OCI-LY7 (cell line): ENCODE measurements at regions of chr4 and their contacts with region 1.

Region 1: DNA sequence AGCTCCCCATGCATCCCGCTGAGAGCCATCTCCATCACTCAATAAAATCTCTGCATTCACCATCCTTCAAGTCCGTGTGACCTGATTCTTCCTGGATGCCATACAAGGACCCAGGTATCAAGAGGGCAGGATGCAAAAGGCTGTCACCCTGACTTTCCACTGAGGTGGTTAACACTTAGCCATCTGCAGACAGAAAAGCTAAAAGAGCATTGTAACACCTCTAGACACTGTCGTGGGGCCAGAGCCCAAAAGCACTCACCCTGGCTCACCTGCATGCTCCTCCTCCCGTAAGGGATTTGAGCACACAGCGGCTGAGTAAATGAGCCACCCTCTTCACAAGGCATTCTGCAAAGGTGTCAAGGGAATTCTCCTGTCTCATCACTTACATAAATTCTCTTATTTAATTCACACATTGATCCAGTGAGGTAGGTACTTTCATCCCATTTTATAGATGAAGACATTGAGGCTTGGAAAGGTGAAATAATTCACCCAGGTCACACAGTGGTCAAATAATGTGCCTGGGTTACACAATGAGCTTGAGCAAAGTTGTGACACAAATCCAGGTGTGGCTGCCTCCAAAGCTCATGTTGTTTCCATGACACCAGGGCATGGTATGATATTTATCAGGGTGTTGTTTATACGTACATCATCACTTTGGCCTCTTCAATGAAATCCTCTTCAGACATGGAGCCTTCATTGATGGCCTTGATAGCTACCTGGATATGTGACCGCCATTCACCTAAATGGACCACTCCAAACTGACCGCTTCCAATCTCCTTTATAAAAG is 48.0 kb downstream of the TXK start:
- DNase-seq: no peak
- H3K4me3 ChIP-seq: no peak overlapping the region
- H3K27ac ChIP-seq: no peak overlapping the region
- H3K4me1 ChIP-seq: no peaks in the 10 kb centered on the region
- CTCF ChIP-seq: no peak

Region 2: GRCh38 chr4:47836641-47837093 is 249.3 kb before region 1 on chr4:
- CTCF ChIA-PET with region 1: no interaction called
- POLR2A ChIA-PET with region 1: no interaction called
- intact Hi-C with region 1: loop called (anchors 5 kb)
- DNase-seq: peak; percentile 73
- H3K4me3 ChIP-seq: peak overlapping the region; percentile 68
- H3K27ac ChIP-seq: no peak overlapping the region
- H3K4me1 ChIP-seq: peaks cover 9% of the 10 kb centered on the region
- CTCF ChIP-seq: peak; percentile 76

Region 3: DNA sequence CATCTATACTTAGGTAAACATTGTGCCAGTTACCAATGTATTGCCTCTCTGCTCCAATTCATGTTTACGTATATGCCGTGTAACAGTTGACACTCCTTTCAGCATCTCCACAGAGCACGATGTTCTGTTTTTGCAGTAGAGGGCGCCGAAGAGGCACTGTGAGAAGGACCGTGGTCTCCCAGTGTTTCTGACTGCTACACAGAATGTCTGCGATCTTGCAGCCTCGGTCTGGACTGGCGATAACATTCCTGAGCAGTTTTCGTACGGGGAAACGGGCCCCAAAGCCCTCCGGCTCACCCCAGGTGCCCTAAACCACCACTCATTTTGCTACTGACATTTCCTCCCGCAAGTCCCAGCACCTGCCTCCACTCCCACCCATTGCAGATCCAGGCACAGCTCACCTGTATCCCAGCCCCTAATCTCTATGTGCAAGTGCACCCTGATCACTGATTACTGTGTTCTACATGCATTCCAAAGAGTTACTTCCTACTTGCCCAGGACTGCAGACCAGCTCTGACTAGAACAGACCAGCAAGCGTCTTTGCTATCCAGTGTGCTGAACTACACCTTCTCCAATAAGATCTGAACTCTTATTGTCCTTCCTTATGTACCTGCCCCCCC is 159.3 kb before region 1 on chr4:
- CTCF ChIA-PET with region 1: no interaction called
- POLR2A ChIA-PET with region 1: no interaction called
- intact Hi-C with region 1: loop called (anchors 1 kb)
- DNase-seq: peak; percentile 65
- H3K4me3 ChIP-seq: peak overlapping the region; percentile 31
- H3K27ac ChIP-seq: no peak overlapping the region
- H3K4me1 ChIP-seq: peaks cover 21% of the 10 kb centered on the region
- CTCF ChIP-seq: peak; percentile 90

Region 4: GRCh38 chr4:48008021-48008596 is 77.9 kb before region 1 on chr4:
- CTCF ChIA-PET with region 1: interaction called, 3 read pairs
- POLR2A ChIA-PET with region 1: no interaction called
- intact Hi-C with region 1: loop called (anchors 1 kb)
- DNase-seq: peak; percentile 61
- H3K4me3 ChIP-seq: no peak overlapping the region
- H3K27ac ChIP-seq: no peak overlapping the region
- H3K4me1 ChIP-seq: no peaks in the 10 kb centered on the region
- CTCF ChIP-seq: no peak

Region 5: DNA sequence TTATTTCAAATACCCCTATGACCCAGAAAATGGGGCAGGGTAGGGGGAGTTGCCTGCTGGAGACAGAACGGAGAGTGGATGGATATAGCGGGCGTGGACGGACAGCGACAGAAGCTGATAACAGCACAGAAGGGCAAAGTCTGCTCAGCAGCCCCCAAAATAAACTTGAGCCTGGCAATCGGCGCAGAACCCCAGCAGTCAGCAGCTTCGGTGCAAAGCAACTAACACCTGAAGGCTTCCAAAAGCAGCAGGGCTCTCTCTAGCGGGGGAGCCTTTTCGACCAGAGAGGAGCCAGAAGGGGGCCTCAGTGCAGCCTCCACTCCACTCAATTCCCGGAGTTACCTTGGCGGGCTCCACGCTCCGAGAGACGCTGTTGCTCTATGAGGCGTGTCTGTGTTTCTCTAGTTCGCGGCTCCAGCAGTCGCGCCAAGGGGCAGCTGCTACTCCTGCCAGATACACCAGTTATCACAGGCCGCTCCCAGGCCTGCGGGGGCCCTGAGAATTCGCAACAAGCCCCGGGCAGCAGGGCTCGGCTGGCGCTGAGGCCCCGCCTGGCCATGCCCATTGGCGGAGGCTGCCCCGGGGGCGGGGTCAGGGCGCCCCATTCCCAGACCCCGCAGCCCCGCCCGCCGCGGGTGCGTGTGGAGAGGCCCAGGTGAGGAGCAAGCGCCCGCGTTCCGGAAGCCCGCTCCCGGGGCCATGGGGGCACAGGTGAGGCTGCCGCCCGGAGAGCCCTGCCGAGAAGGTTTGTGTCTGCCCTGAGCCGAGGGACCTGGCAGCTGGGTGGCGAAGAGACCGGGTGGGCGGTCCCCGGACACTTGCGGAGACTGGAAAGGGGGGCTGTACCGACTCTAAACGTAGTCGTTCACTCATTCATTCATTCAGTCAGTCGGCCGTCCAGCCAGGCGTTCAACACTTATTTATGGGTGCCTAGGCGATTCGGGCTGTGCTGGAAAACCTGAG is 69.6 kb before region 1 on chr4 and contains the starts of genes CNGA1 and NIPAL1:
- CTCF ChIA-PET with region 1: no interaction called
- POLR2A ChIA-PET with region 1: interaction called, 3 read pairs
- intact Hi-C with region 1: loop called (anchors 1 kb)
- DNase-seq: peak; percentile 77
- H3K4me3 ChIP-seq: peak within 1 kb of the TSS; percentile 73
- H3K27ac ChIP-seq: no peak within 1 kb of the TSS
- H3K4me1 ChIP-seq: peaks cover 9% of the 10 kb centered on the region
- CTCF ChIP-seq: peak; percentile 81
- total RNA-seq, gene CNGA1: not detected in 2 replicates
- total RNA-seq, gene NIPAL1: 0.28 and 1.1 TPM in 2 replicates

Region 6: DNA sequence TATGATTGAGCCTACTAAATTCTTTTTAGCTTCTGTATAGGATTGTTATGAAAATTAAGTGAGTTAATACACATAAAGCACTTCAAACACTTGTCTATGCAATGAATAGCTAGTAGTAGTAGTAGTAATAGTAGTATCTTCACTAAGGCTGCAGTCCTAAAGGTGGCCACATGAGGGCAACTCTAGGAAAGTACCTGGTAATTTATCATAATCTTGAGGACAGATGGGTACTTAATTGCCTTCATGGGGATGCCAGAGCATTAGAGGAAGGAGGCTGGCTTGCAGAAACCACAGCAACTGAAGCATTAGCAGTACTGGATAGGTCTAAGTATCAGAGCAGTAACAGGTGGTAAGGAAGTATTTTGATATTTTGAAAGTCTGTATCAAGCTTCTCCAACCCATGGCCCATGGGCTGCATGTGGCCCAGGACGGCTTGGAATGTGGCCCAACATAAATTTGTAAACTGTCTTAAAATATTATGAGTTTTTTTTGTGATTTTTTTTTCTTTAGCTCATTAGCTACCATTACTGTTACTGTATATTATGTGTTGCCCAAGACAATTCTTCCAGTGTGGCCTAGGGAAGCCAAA is 52.1 kb before region 1 on chr4:
- CTCF ChIA-PET with region 1: no interaction called
- POLR2A ChIA-PET with region 1: interaction called, 7 read pairs
- intact Hi-C with region 1: loop called (anchors 2 kb)
- DNase-seq: peak; percentile 79
- H3K4me3 ChIP-seq: no peak overlapping the region
- H3K27ac ChIP-seq: peak overlapping the region; percentile 7
- H3K4me1 ChIP-seq: peaks cover 71% of the 10 kb centered on the region
- CTCF ChIP-seq: peak; percentile 88